Endothelial cell of umbilical vein (primary cell): ENCODE measurements at regions of chr11 and their contacts with region 1.

Region 1: DNA sequence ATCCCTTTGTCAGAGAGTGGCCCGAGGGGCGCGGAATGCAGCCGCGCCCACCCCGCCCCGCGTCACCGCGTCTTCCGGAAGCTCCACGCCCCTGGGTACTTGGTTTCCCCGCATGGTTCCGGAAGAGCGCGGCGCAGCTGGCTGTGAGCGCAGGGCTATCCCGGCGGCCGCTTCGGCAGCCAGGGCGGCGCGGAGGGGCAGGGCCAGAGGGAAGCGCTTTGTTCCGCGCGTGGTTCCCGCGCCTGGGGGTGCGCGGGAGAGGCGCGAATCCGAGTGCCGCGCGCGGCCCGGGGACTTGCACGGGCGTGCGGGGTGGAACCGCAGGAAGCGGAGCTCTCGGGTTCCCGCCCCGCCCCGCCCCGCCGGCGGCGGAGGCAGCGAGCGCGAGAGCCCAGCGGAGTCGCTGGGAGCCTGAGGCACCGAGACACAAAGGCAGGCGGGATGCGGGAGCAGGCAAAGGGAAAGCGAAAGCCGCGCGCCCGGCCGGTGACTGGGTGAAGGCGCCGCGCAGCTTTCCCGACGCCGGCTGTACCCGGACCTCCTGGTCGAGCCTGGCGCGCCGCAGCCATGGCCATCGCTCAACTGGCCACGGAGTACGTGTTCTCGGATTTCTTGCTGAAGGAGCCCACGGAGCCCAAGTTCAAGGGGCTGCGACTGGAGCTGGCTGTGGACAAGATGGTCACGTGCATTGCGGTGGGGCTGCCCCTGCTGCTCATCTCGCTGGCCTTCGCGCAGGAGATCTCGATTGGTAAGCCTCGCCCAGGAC is at the start of gene PANX1:
- DNase-seq: peak; percentile 81
- H3K4me3 ChIP-seq: peak within 1 kb of the TSS; percentile 76 to 87 (median 77)
- H3K27ac ChIP-seq: peak within 1 kb of the TSS; percentile 86
- H3K4me1 ChIP-seq: peaks cover 41% of the 10 kb centered on the region
- H3K27me3 ChIP-seq: no peaks in the 10 kb centered on the region
- CTCF ChIP-seq: no peak
- POLR2A ChIP-seq: peak; percentile 76
- total RNA-seq, gene PANX1: 17.7 and 20.9 TPM in 2 replicates

Region 2: GRCh38 chr11:93849751-93850593 is 279.0 kb before region 1 on chr11:
- CTCF ChIA-PET with region 1: no interaction called
- POLR2A ChIA-PET with region 1: no interaction called
- dilution Hi-C with region 1: no loop called
- intact Hi-C with region 1: loop called (anchors 1 kb)
- DNase-seq: peak; percentile 6
- H3K4me3 ChIP-seq: peak overlapping the region in 2 of 3 experiments; percentile 11 to 36
- H3K27ac ChIP-seq: no peak overlapping the region
- H3K4me1 ChIP-seq: peaks cover 3% of the 10 kb centered on the region
- H3K27me3 ChIP-seq: no peaks in the 10 kb centered on the region
- CTCF ChIP-seq: no peak
- POLR2A ChIP-seq: no peak

Region 3: DNA sequence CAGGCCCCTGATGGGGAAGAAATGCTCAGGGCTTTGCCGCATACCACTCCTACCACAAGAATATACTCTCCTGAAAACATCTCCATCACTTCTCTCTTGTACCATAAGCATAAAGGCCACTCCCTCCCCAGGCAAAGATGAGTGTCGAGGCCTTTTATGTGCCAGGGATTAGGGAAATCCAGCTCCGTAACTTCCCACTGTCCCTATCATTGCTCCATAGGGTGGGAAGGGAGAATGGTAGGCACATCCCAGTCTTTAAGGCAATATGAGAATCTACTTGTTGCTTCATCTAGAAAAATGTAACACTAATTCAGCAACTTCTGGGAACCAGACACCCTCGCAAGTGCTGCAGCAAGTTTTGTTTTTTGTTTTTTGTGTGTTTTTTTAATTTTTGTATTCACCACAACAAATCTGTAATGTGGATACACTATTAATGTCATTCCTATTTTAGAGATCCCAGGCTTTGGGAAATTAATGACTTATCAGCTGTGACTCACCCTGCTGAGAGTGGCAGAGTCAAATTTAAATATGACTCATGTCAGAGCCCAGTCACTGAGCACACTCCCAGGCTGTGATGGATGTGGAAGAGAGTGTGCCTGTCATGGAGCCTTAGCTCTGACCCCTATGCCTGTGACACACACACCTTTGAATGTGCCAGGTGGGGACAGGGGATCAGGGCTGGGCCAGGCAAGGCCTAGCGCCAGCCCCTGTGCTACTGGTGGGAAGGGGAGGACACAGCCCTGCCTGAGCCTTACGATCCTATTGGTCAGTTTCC is 23.2 kb after region 1 on chr11:
- CTCF ChIA-PET with region 1: interaction called, 11 read pairs
- POLR2A ChIA-PET with region 1: interaction called, 3 read pairs
- dilution Hi-C with region 1: no loop called
- intact Hi-C with region 1: loop called (anchors 1 kb)
- DNase-seq: peak; percentile 81
- H3K4me3 ChIP-seq: no peak overlapping the region
- H3K27ac ChIP-seq: peak overlapping the region; percentile 34
- H3K4me1 ChIP-seq: peaks cover 34% of the 10 kb centered on the region
- H3K27me3 ChIP-seq: no peaks in the 10 kb centered on the region
- CTCF ChIP-seq: no peak
- POLR2A ChIP-seq: no peak

Region 4: DNA sequence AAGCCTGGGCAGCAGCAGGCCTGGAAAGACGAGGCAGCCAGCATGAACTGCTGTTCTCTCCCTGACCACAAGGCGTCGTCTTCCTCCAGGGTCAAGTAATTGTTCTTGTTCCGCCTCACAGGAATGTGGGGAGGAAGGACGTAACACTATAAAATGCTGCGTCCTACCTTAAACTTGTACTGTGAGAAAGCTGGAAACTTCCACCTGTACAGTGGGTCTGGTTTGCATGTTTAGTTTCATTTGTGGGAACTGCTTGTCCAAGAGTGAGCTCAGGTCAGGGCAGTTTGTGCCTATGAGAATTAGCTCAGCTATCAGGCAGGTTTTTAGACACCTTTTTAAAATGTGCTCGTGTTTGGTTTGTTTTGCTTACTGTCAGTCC is 54.9 kb after region 1 on chr11:
- CTCF ChIA-PET with region 1: interaction called, 64 read pairs
- POLR2A ChIA-PET with region 1: no interaction called
- dilution Hi-C with region 1: no loop called
- intact Hi-C with region 1: loop called (anchors 1 kb)
- DNase-seq: peak; percentile 71
- H3K4me3 ChIP-seq: no peak overlapping the region
- H3K27ac ChIP-seq: no peak overlapping the region
- H3K4me1 ChIP-seq: no peaks in the 10 kb centered on the region
- H3K27me3 ChIP-seq: no peaks in the 10 kb centered on the region
- CTCF ChIP-seq: peak; percentile 84 to 89
- POLR2A ChIP-seq: no peak

Region 5: DNA sequence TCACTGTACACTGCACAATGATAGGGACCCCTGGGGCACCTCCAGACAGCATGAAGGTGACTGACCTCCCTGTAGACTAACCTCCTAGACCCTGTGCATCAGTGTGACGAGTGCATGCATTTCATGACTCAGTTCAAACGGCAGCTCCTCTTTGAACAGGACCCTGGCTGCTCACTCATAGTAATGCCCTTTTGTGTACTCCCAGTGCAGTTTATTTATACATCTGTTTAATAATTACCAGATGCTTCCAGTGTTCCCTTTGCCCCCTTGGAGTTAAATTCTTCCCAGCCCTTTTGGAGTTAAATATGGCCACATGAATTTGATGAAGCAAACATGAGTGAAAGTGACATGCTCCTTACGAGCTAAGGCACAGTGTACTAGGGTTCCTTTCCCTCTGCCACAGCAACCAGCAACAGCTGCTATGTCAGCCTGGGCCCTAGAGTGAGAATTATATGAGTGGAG is 72.1 kb after region 1 on chr11:
- CTCF ChIA-PET with region 1: no interaction called
- POLR2A ChIA-PET with region 1: no interaction called
- dilution Hi-C with region 1: no loop called
- intact Hi-C with region 1: no loop called
- DNase-seq: no peak
- H3K4me3 ChIP-seq: no peak overlapping the region
- H3K27ac ChIP-seq: no peak overlapping the region
- H3K4me1 ChIP-seq: no peaks in the 10 kb centered on the region
- H3K27me3 ChIP-seq: peaks cover 0 to 1% of the 10 kb centered on the region in 2 experiments
- CTCF ChIP-seq: no peak
- POLR2A ChIP-seq: no peak